ENCODE measurements at regions of chr17 and their contacts with region 1.

Region 1: GRCh38 chr17:78421484-78422266 is 43.2 kb downstream of the PGS1 start:
- DNase-seq: peak; percentile 77
- H3K4me3 ChIP-seq: no peak overlapping the region
- H3K27ac ChIP-seq: no peak overlapping the region
- H3K4me1 ChIP-seq: peaks cover 9% of the 10 kb centered on the region
- H3K27me3 ChIP-seq: no peaks in the 10 kb centered on the region
- CTCF ChIP-seq: peak; percentile 97 to 98
- POLR2A ChIP-seq: no peak

Region 2: DNA sequence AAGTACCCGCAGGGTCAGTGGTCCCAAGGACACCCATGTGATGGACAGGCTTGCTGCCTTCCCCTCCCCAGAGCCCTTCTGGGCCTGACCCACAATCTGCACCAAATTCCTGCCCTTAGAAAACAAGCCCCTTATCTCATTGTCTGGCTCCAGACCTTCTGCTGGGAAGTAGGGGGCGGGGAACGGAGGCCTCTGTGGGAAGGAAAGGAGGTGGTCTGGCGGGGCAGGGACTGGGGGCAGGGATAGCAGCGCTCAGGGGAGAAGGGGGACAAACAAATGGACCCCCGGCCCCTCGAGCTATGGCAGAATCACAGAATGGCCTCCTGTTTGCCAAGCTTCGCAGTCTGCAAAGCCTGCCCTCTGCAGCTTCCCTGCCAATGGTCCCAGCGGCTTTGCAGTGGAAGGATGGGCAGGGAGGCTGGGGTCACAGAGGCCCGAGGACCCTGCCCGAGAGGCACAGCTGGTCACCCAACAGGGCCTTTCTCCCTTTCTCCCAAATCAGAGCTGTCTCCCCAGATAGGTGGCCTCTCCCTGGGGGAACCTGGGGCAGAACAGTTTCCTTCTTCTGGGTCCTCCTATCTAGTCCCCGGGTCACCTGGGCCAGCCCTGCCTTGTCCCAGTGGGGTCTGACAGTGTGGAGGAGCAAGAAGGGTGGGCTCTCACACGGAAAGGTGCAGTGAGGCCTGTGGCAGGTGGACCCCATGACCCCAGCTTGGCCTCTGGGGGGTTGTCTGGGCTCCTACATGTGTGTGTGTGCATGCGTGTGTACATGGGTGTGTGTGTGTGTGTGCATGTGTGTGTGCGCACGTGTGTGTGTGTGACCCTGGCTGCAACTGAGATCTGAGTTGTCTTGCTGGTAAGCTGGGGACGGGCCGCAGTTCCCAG is 164.7 kb before region 1 on chr17:
- CTCF ChIA-PET with region 1: interaction called, 11 read pairs
- POLR2A ChIA-PET with region 1: no interaction called
- dilution Hi-C with region 1: no loop called
- intact Hi-C with region 1: no loop called
- DNase-seq: peak; percentile 45
- H3K4me3 ChIP-seq: no peak overlapping the region
- H3K27ac ChIP-seq: no peak overlapping the region
- H3K4me1 ChIP-seq: peaks cover 9% of the 10 kb centered on the region
- H3K27me3 ChIP-seq: no peaks in the 10 kb centered on the region
- CTCF ChIP-seq: no peak
- POLR2A ChIP-seq: no peak

Region 3: DNA sequence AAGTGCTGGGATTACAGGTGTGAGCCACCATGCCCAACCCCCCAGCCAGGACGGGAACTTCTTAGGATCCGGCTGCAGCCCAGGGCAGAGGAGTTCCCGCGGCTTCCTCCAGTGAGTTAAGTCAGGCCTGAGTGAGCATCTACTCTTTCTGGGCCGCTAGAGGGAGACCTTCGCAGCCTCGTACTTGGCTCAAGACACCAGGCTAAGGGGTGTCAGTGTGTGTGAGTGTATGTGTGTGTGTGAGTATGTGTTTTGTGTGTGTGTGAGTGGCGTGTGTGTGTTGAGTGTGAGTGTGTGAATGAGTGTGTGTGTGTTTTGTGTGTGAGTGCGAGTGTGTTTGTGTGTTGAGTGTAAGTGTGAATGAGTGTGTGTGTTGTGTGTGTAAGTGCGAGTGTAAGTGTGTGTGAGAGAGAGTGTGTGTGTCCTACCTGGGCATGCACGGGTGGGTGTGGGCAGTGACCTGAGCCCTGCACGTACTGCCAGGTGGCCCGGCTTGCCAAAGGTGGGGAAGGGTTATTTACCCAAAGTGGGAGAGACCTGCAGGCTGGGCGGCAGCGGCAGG is 131.8 kb before region 1 on chr17:
- CTCF ChIA-PET with region 1: interaction called, 22 read pairs
- POLR2A ChIA-PET with region 1: no interaction called
- dilution Hi-C with region 1: no loop called
- intact Hi-C with region 1: loop called (anchors 1 kb)
- DNase-seq: peak; percentile 85
- H3K4me3 ChIP-seq: no peak overlapping the region
- H3K27ac ChIP-seq: no peak overlapping the region
- H3K4me1 ChIP-seq: no peaks in the 10 kb centered on the region
- H3K27me3 ChIP-seq: no peaks in the 10 kb centered on the region
- CTCF ChIP-seq: peak; percentile 74 to 91
- POLR2A ChIP-seq: no peak

Region 4: DNA sequence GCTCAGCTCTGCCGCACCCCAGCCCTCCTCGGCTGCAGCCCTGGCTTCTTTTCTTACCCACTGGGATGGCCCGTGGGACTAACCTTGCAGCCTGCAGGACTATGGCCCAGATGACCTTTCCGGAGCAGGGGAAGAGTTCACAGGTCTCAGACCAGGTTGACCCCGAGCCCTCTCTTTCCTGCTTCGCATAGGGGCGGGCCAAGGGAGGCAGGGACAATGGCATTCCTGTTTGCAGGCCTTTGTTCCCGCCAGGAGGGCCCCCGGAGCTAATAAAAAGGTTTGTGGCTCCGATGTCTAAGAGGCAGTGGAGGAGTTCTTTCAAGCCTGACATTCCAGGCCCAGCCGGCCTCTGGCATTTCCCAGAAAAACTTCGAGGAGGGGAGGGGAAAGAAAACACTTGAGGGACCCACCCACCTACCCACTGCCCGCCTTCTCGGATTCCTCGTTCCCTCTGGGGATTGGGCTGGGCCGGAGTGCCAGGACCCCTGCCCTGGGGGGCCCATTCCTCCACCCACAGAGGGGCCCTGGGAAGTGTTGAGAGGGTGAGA is 56.0 kb before region 1 on chr17:
- CTCF ChIA-PET with region 1: interaction called, 184 read pairs
- POLR2A ChIA-PET with region 1: interaction called, 4 read pairs
- dilution Hi-C with region 1: no loop called
- intact Hi-C with region 1: loop called (anchors 1 kb)
- DNase-seq: no peak
- H3K4me3 ChIP-seq: no peak overlapping the region
- H3K27ac ChIP-seq: no peak overlapping the region
- H3K4me1 ChIP-seq: peaks cover 10% of the 10 kb centered on the region
- H3K27me3 ChIP-seq: no peaks in the 10 kb centered on the region
- CTCF ChIP-seq: no peak
- POLR2A ChIP-seq: no peak

Region 5: DNA sequence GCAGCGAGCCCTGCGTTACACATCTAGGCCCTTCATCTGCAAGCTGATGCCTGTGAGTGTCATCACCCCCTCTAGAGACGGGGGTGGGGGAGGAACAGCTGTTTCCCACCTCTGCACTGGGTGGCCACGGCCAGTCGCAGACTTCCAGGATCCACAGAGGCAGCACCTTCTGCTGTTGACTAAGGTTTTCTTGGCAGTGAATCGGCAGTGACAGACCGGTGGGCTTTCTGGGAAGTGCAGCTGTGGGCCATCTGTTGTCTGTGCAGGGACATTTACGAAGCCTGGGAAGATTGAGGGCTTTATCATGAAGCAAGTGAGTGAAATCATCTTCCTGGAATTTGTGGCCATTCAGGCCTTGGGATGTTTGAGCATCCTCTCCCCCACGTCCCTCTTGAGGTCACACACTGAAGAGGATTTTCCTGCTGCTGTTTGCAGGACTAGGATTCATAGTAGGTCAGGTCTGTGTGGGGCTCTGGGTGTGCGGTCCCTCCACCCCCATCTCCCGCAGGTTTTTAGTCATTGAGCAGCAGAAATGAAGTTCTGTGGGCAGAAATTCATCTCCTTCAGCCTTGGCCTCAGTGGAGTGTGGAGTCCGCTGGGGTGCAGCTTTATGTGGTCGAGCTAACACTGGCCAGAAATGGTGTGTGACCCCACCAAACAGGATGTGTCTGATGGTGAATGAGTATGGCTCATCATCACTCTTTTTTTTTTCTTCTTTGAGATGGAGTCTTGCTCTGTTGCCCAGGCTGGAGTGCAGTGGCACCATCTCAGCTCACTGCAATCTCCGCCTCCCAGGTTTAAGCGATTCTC is 31.2 kb before region 1 on chr17:
- CTCF ChIA-PET with region 1: interaction called, 12 read pairs
- POLR2A ChIA-PET with region 1: no interaction called
- dilution Hi-C with region 1: no loop called
- intact Hi-C with region 1: no loop called
- DNase-seq: no peak
- H3K4me3 ChIP-seq: no peak overlapping the region
- H3K27ac ChIP-seq: peak overlapping the region; percentile 59
- H3K4me1 ChIP-seq: peaks cover 61% of the 10 kb centered on the region
- H3K27me3 ChIP-seq: no peaks in the 10 kb centered on the region
- CTCF ChIP-seq: peak in 1 of 2 donors; percentile 16
- POLR2A ChIP-seq: no peak

Region 6: DNA sequence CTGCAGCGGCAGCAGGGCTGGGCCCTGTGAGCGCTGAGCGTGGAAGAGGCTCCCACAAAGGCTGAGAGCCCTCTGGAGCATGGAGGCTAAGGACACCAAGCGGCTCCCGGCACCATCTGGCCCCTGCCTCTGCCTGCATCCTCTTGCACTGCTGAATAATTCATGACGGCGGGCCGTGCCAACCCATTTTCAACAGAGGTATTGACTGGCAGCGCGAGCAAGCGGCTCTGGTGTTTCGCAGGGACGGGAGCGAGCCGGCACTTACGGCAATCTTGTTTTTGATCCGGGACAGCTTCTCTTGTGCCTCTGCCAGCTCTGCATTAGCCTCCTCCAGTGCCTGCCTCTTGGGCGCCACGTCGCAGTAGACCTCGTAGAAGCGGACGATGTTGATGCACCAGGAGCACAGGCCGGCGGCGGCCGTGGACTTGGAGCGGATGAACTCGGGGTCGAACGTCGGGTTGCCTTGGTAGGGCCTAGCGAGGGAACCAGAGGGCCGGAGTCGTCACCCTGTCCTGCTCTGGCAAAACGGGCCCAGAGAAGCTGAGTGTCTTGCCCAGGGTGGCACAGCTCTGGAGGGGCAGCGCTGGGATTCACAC is 37.2 kb after region 1 on chr17:
- CTCF ChIA-PET with region 1: no interaction called
- POLR2A ChIA-PET with region 1: no interaction called
- dilution Hi-C with region 1: no loop called
- intact Hi-C with region 1: no loop called
- DNase-seq: no peak
- H3K4me3 ChIP-seq: no peak overlapping the region
- H3K27ac ChIP-seq: no peak overlapping the region
- H3K4me1 ChIP-seq: no peaks in the 10 kb centered on the region
- H3K27me3 ChIP-seq: no peaks in the 10 kb centered on the region
- CTCF ChIP-seq: no peak
- POLR2A ChIP-seq: no peak

Measured in endothelial cell of umbilical vein (primary cell).